Psoas muscle (tissue), 8 donors: ENCODE measurements at regions of chr3 and their contacts with region 1.

Region 1: DNA sequence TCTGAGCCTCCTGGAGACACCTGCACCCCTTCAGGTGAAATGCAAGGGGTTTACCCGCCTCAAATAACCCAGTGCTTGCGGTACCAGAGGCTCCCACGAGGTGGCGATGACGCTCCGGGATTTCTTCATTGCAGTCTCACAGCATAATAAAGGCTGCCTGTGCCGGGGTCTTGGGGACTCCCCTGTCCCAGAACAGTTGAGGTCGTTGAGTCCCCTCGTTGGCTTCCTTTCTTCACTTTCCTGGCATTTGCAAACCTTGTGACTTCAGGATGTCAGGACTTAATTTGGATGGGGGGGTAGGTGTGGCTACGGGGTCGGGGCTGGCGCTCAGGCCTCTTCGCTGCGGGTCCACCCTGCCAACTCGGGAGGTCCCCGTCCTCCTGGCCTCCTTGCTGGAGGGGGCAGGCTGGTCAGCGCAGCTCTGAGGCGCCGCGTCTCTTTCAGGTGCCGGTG is 1.3 kb downstream of the GNAT1 start:
- DNase-seq: peak; percentile 64 to 80
- ATAC-seq: peak; percentile 36 to 66 (median 53)
- H3K4me3 ChIP-seq: peak overlapping the region; percentile 25
- H3K27ac ChIP-seq: no peak overlapping the region
- H3K4me1 ChIP-seq: peaks cover 9% of the 10 kb centered on the region
- H3K27me3 ChIP-seq: peaks cover 0 to 18% (median 0%) of the 10 kb centered on the region in 3 donors
- CTCF ChIP-seq: peak; percentile 86

Region 2: DNA sequence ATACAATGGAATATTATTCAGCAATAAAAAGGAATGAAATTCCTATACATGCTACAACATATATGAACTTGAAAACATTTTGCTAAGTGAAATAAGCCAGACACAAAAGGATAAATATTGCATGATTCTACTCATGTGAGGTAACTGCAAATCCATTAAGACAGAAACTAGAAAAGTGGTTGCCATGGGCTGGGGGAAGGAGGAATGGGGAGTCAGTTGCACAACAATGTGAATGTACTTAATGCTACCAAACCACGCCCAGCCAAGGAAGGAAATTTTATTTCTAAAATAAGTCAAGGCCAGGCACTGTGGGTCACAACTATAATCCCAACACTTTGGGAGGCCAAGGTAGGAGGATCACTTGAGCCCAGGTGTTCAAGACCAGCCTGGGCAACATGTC is 459.2 kb before region 1 on chr3:
- intact Hi-C with region 1: no loop called
- DNase-seq: no peak
- ATAC-seq: no peak
- H3K4me3 ChIP-seq: no peak overlapping the region
- H3K27ac ChIP-seq: no peak overlapping the region
- H3K4me1 ChIP-seq: no peaks in the 10 kb centered on the region
- H3K27me3 ChIP-seq: no peaks in the 10 kb centered on the region
- CTCF ChIP-seq: no peak

Region 3: GRCh38 chr3:50121416-50122032 is 71.2 kb before region 1 on chr3:
- intact Hi-C with region 1: loop called (anchors 1 kb)
- DNase-seq: peak; percentile 72 to 88
- ATAC-seq: peak; percentile 84 to 90 (median 86)
- H3K4me3 ChIP-seq: no peak overlapping the region
- H3K27ac ChIP-seq: no peak overlapping the region
- H3K4me1 ChIP-seq: peaks cover 4% of the 10 kb centered on the region
- H3K27me3 ChIP-seq: no peaks in the 10 kb centered on the region
- CTCF ChIP-seq: peak; percentile 87

Region 4: GRCh38 chr3:50154840-50155474 is 37.8 kb before region 1 on chr3 and contains the start of gene SEMA3F:
- intact Hi-C with region 1: loop called in 1 of 2 experiments (anchors 2 kb)
- DNase-seq: peak; percentile 72 to 84
- ATAC-seq: peak; percentile 85 to 93 (median 91)
- H3K4me3 ChIP-seq: peak within 1 kb of the TSS; percentile 79
- H3K27ac ChIP-seq: peak within 1 kb of the TSS; percentile 70
- H3K4me1 ChIP-seq: peaks cover 13% of the 10 kb centered on the region
- H3K27me3 ChIP-seq: no peaks in the 10 kb centered on the region
- CTCF ChIP-seq: peak; percentile 14
- total RNA-seq, gene SEMA3F: 7.0 to 13.7 (median 12.3) TPM

Region 5: DNA sequence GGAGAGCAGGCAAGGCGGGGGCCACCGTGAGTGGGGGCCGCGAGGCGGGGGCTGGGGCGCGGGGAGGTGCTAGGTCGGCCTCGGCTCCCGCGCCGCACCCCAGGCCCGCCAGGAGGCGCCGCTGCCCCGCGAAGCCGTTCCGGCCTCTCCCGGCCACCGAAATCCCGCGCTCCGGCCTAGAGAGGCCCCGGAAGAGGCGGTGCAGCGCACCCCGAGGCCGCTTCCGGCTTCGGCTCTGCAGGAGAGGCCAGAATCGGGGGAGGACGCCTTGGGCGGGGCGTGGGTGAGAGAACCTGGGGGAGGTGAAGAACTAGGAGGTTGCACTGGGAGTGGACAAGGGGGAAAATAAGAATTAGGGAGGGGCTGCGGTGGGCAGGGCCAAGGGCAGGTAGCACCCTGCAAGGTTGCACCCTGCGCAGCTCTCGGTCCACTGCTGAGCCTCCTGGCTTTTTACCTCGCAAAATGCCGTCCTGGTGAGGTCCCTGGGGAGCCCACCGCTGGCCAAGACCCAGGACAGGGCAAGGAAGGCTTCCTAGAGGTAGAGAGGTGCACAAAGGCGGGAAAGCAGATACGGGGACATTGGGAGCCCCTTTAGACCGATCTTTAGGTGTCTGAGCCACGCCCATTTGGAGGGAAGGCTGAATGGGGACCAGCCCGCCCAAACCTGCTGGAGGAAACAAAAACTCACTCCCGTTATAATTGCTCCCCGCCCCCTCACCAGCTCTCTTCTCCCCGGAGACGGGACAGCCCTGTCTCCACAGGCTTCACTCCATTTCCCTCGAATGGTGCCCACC is 34.9 kb after region 1 on chr3:
- intact Hi-C with region 1: loop called (anchors 1 kb)
- DNase-seq: peak; percentile 92 to 96
- ATAC-seq: peak; percentile 90 to 95 (median 92)
- H3K4me3 ChIP-seq: peak overlapping the region; percentile 78
- H3K27ac ChIP-seq: peak overlapping the region; percentile 55
- H3K4me1 ChIP-seq: peaks cover 5% of the 10 kb centered on the region
- H3K27me3 ChIP-seq: no peaks in the 10 kb centered on the region
- CTCF ChIP-seq: peak; percentile 94

Region 6: DNA sequence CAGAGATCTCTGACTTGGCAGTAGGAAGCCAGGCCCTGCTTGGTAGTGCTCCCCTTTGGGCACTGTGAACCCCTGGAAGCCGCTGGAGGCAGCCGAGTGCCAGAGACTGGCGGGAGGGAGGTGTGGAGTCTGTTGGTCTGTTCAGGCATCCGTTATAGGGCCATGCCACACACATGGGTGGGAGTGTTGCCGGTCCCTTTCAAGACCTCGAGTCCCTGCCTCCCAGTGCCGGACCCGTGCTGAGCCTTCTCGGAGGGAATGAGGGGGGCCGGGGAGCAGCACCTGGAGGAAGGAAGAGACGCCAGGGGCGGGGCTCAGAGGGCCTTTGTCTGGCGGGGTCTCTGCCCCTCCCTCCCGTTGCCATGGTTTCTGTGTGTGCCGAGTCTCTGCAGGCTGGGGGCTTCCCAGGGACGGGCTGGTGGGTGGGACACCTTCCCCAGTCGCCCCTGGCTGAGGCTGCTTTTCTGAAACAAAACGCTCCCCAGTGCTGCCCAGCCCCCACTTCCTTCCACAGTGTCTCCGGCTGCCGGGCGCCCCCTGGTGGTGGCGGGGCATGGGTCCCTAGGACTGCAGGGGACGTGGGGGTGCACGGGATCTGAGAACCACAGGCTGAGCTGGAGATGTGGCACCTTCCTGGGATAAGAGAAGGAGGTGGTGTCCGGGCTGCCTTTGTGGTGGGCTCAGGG is 53.3 kb after region 1 on chr3:
- intact Hi-C with region 1: no loop called
- DNase-seq: peak; percentile 94 to 96
- ATAC-seq: peak; percentile 83 to 91 (median 89)
- H3K4me3 ChIP-seq: peak overlapping the region; percentile 82
- H3K27ac ChIP-seq: peak overlapping the region; percentile 80
- H3K4me1 ChIP-seq: peaks cover 67% of the 10 kb centered on the region
- H3K27me3 ChIP-seq: no peaks in the 10 kb centered on the region
- CTCF ChIP-seq: peak; percentile 98

Region 7: GRCh38 chr3:50272911-50273693 is 80.4 kb after region 1 on chr3:
- intact Hi-C with region 1: loop called (anchors 2 to 5 kb)
- DNase-seq: peak; percentile 86 to 93
- ATAC-seq: peak; percentile 79 to 86 (median 84)
- H3K4me3 ChIP-seq: peak overlapping the region; percentile 38
- H3K27ac ChIP-seq: no peak overlapping the region
- H3K4me1 ChIP-seq: peaks cover 30% of the 10 kb centered on the region
- H3K27me3 ChIP-seq: peaks cover 0 to 1% (median 0%) of the 10 kb centered on the region in 3 donors
- CTCF ChIP-seq: peak; percentile 99

Region 8: GRCh38 chr3:50327943-50328691 is 135.4 kb after region 1 on chr3 and contains the start of gene TUSC2:
- intact Hi-C with region 1: loop called in 1 of 2 experiments (anchors 2 kb)
- DNase-seq: peak; percentile 98
- ATAC-seq: peak; percentile 92 to 94 (median 93)
- H3K4me3 ChIP-seq: peak within 1 kb of the TSS; percentile 100
- H3K27ac ChIP-seq: peak within 1 kb of the TSS; percentile 95
- H3K4me1 ChIP-seq: peaks cover 31% of the 10 kb centered on the region
- H3K27me3 ChIP-seq: no peaks in the 10 kb centered on the region
- CTCF ChIP-seq: no peak
- total RNA-seq, gene TUSC2: 31.5 to 43.6 (median 33.7) TPM

Region 9: DNA sequence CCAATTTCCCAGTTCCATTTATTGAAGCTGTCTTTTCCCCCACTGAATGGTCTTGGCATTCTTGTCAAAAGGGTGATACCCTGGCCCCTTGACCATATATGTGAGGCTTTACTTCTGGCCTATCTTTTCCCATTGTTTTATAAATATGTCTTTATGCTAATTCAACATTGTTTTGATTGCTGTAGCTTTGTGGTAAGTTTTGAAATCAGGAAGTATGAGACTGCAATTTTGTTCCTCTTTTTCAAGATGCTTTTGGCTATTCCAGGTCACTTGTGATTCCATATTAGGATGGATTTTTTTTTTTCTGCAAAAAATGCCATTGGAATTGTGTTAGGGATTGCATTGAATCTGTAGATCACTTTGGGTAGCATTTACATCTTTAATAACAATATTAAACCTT is 1051.2 kb after region 1 on chr3:
- intact Hi-C with region 1: no loop called
- DNase-seq: no peak
- ATAC-seq: no peak
- H3K4me3 ChIP-seq: no peak overlapping the region
- H3K27ac ChIP-seq: no peak overlapping the region
- H3K4me1 ChIP-seq: no peaks in the 10 kb centered on the region
- H3K27me3 ChIP-seq: peaks cover 0 to 6% (median 0%) of the 10 kb centered on the region in 3 donors
- CTCF ChIP-seq: no peak